ENCODE measurements at regions of chr3 and their contacts with region 1.

Region 1: GRCh38 chr3:151227807-151228665 is 25.0 kb upstream of the GPR171 start:
- DNase-seq: peak; percentile 89
- ATAC-seq: peak; percentile 84
- H3K4me3 Mint-ChIP-seq: peak overlapping the region; percentile 19
- H3K27ac Mint-ChIP-seq: peak overlapping the region; percentile 82
- H3K4me1 Mint-ChIP-seq: peaks cover 65% of the 10 kb centered on the region
- H3K27me3 Mint-ChIP-seq: no peaks in the 10 kb centered on the region

Region 2: GRCh38 chr3:151156618-151157216 is 71.3 kb before region 1 on chr3:
- CTCF ChIA-PET with region 1: interaction called, 16 read pairs
- POLR2A ChIA-PET with region 1: no interaction called
- DNase-seq: peak; percentile 64
- ATAC-seq: peak; percentile 87
- H3K4me3 Mint-ChIP-seq: no peak overlapping the region
- H3K27ac Mint-ChIP-seq: no peak overlapping the region
- H3K4me1 Mint-ChIP-seq: no peaks in the 10 kb centered on the region
- H3K27me3 Mint-ChIP-seq: peaks cover 6% of the 10 kb centered on the region

Region 3: GRCh38 chr3:151174351-151174750 is 53.7 kb before region 1 on chr3:
- CTCF ChIA-PET with region 1: interaction called, 195 read pairs
- POLR2A ChIA-PET with region 1: no interaction called
- DNase-seq: no peak
- ATAC-seq: no peak
- H3K4me3 Mint-ChIP-seq: no peak overlapping the region
- H3K27ac Mint-ChIP-seq: no peak overlapping the region
- H3K4me1 Mint-ChIP-seq: peaks cover 42% of the 10 kb centered on the region
- H3K27me3 Mint-ChIP-seq: no peaks in the 10 kb centered on the region

Region 4: GRCh38 chr3:151203051-151203420 is 25.0 kb before region 1 on chr3 and contains the start of gene GPR171:
- CTCF ChIA-PET with region 1: interaction called, 65 read pairs
- POLR2A ChIA-PET with region 1: interaction called, 7 read pairs
- DNase-seq: peak; percentile 85
- ATAC-seq: peak; percentile 73
- H3K4me3 Mint-ChIP-seq: peak within 1 kb of the TSS; percentile 87
- H3K27ac Mint-ChIP-seq: peak within 1 kb of the TSS; percentile 94
- H3K4me1 Mint-ChIP-seq: peaks cover 59% of the 10 kb centered on the region
- H3K27me3 Mint-ChIP-seq: no peaks in the 10 kb centered on the region
- total RNA-seq, gene GPR171: 115 to 124 TPM

Region 5: DNA sequence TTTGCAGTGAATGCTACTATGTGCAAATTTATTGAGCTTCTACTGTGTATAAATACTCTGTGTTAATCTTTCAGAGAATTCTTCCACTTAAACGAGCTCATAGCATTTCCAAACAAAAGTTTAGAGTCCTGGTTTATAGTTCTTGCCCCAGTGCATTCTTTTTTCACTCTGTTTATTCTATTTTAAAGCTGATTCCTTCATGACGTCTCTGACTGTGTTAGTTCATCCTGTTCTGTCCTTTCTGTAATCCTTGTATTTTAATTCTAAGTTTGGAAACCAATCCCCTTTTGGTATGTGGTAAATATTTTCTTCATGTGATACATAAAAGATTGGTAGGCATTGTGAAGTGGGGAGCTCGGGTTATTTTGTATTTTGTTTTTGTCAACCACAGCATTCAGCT is 31.6 kb after region 1 on chr3:
- CTCF ChIA-PET with region 1: interaction called, 11 read pairs
- POLR2A ChIA-PET with region 1: no interaction called
- DNase-seq: no peak
- ATAC-seq: no peak
- H3K4me3 Mint-ChIP-seq: no peak overlapping the region
- H3K27ac Mint-ChIP-seq: no peak overlapping the region
- H3K4me1 Mint-ChIP-seq: no peaks in the 10 kb centered on the region
- H3K27me3 Mint-ChIP-seq: peaks cover 15% of the 10 kb centered on the region

Region 6: GRCh38 chr3:151282921-151283320 is 54.9 kb after region 1 on chr3:
- CTCF ChIA-PET with region 1: interaction called, 408 read pairs
- POLR2A ChIA-PET with region 1: interaction called, 7 read pairs
- DNase-seq: no peak
- ATAC-seq: peak; percentile 62
- H3K4me3 Mint-ChIP-seq: no peak overlapping the region
- H3K27ac Mint-ChIP-seq: no peak overlapping the region
- H3K4me1 Mint-ChIP-seq: peaks cover 51% of the 10 kb centered on the region
- H3K27me3 Mint-ChIP-seq: no peaks in the 10 kb centered on the region

Region 7: GRCh38 chr3:151367448-151367847 is 139.4 kb after region 1 on chr3:
- CTCF ChIA-PET with region 1: no interaction called
- POLR2A ChIA-PET with region 1: no interaction called
- DNase-seq: no peak
- ATAC-seq: no peak
- H3K4me3 Mint-ChIP-seq: no peak overlapping the region
- H3K27ac Mint-ChIP-seq: no peak overlapping the region
- H3K4me1 Mint-ChIP-seq: no peaks in the 10 kb centered on the region
- H3K27me3 Mint-ChIP-seq: peaks cover 10% of the 10 kb centered on the region

Region 8: DNA sequence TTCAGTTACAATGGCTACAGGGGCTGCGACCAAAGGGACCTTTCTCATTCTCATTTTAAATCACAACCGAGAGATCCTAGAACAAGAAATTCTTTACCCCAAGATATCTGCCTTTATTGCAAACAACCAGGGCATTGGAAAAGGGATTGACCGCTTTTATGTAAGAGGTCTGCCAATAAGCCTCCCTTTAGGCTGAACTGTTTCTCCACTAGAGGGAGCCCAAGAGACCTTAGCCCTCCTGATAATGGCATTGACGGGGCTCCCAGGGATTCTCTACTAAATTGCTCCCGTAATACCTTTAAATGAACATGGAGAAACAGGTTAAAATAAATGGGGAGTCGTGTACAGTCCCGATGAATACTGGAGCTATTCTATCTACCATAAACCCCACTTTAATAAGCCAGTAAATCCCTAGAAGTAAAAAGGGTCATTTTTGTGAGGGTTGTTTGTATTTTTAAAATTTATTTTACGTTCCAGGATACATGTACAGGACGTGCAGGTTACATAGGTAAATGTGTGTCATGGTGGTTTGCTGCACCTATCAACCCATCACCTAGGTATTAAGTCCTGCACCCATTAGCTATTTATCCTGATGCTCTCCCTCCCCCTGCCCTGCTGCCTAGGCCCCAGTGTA is 240.4 kb after region 1 on chr3:
- CTCF ChIA-PET with region 1: interaction called, 10 read pairs
- POLR2A ChIA-PET with region 1: no interaction called
- DNase-seq: peak; percentile 53
- ATAC-seq: peak; percentile 83
- H3K4me3 Mint-ChIP-seq: no peak overlapping the region
- H3K27ac Mint-ChIP-seq: no peak overlapping the region
- H3K4me1 Mint-ChIP-seq: no peaks in the 10 kb centered on the region
- H3K27me3 Mint-ChIP-seq: peaks cover 9% of the 10 kb centered on the region

Measured in activated CD8-positive, alpha-beta T cell treated with anti-CD3 and anti-CD28 coated beads, Interleukin-2, amount 10 ng/mL, durations not matched to agents 7 days and 5 days (primary cell).